Astrocyte of the cerebellum (primary cell): ENCODE measurements at regions of chr5 and their contacts with region 1.

Region 1: GRCh38 chr5:59640411-59640810 is 253.1 kb downstream of the PDE4D start:
- DNase-seq: no peak
- H3K4me3 ChIP-seq: no peak overlapping the region
- CTCF ChIP-seq: no peak

Region 2: GRCh38 chr5:59506285-59506877 is 134.0 kb before region 1 on chr5:
- in situ Hi-C with region 1: loop called (anchors 25 kb)
- DNase-seq: peak; percentile 27
- H3K4me3 ChIP-seq: no peak overlapping the region
- CTCF ChIP-seq: peak; percentile 16

Region 3: DNA sequence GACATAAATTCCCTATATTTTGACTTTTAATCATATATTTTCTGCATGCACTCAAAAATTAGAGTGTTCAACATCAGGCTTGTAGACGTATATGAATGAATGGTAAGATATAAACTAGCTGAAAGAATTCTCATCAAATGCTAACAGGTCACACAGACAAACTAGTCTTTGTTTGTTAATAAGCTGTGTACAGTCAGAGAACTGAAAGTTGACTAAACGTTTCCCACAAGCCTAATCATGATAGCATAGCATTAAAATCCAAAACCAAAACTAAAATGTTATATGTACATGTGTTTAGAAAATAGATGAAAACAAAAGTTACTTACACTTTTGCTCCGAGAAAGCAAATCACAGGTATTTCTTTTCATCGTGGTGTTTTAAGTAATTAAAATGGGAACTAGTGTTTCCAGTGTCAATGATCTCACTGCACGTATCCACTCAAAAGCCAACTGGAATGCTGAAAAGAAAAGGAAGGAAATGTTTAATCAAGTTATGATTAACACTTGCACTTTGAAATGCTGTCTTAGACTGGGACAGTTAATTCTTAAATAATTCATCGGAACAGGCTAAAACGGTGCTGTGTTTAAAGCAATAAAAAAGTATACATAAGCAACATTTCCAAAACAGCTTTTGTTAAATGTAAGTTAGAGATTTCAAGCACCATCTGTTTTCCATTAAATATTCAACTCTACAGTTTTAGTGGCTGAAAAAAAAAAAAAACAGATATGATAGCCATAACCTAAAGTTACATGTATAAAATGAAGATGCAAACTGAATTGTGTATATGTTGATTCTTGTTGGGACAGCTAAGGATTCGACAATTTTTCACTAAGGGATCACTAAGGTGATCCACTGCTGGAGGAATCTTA is 545.1 kb after region 1 on chr5:
- in situ Hi-C with region 1: no loop called
- DNase-seq: no peak
- H3K4me3 ChIP-seq: no peak overlapping the region
- CTCF ChIP-seq: no peak